Activated naive CD4-positive, alpha-beta T cell treated with anti-CD3 and anti-CD28 coated beads for 36 hours (primary cell): ENCODE measurements at regions of chr19 and their contacts with region 1.

Region 1: DNA sequence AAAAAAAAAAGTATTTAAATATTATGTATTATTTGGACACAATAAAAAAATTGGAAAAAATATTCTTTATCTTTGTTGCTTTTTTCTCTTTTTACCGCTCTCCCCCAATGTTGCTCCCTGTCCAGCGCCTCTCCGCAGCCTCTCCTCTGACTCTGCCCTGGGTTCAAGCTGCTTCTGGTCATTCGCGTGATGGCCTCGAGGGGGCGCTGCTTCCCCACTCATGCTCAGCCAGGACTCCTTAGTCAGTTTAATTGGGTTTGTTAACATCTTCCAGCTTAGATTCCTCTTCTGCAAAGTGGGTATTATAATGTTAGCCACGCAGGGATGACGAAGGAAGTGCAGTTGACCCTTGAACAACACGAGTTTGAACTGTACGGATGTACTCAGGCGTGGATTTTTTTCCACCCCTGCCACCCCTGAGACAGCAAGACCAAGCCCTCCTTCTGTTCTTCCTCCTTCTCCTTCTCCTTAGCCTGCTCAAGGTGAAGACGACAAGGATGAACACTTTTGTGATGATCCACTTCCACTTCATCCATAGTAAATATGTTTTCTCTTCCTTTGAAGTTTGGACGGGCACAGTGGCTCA is 4.9 kb upstream of the NWD1 start:
- DNase-seq: peak; percentile 71
- H3K4me3 Mint-ChIP-seq: no peak overlapping the region
- H3K27ac Mint-ChIP-seq: no peak overlapping the region
- H3K4me1 Mint-ChIP-seq: peaks cover 3% of the 10 kb centered on the region
- H3K27me3 Mint-ChIP-seq: peaks cover 3% of the 10 kb centered on the region

Region 2: DNA sequence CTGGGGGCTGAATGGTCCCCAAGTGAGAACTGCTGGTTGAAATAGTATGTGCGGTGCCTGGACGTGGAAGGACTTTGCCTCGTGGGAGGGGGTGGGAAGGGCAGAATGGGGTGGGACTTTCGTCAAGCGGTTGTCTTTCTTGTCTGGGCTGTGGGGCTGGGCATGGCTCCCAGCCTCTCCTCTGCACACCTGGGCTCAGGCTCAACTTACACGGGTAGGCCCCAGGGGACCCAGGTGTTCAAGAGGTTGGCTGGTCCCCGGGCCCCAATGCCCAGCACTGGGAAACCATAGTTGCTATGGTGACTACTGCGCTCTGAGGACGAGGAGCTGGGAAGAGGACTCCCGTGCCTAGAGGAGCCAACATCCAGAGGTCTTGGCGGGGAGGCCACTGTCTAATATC is 12.1 kb after region 1 on chr19:
- CTCF ChIA-PET with region 1: interaction called, 14 read pairs
- intact Hi-C with region 1: no loop called
- DNase-seq: no peak
- H3K4me3 Mint-ChIP-seq: no peak overlapping the region
- H3K27ac Mint-ChIP-seq: no peak overlapping the region
- H3K4me1 Mint-ChIP-seq: no peaks in the 10 kb centered on the region
- H3K27me3 Mint-ChIP-seq: no peaks in the 10 kb centered on the region